Gastrocnemius medialis (tissue), 4 donors: ENCODE measurements at regions of chr16 and their contacts with region 1.

Region 1: GRCh38 chr16:75198135-75198600 is 8.8 kb downstream of the CTRB2 start:
- DNase-seq: no peak
- ATAC-seq: no peak
- H3K4me3 ChIP-seq: no peak overlapping the region
- H3K27ac ChIP-seq: no peak overlapping the region
- H3K4me1 ChIP-seq: no peaks in the 10 kb centered on the region
- H3K27me3 ChIP-seq: peaks cover 0 to 10% (median 7%) of the 10 kb centered on the region in 3 donors
- CTCF ChIP-seq: no peak
- POLR2A ChIP-seq: no peak

Region 2: GRCh38 chr16:75379911-75380847 is 182.0 kb after region 1 on chr16:
- in situ Hi-C with region 1: loop called in 3 of 4 experiments (anchors 5 kb)
- intact Hi-C with region 1: loop called (anchors 1 kb)
- DNase-seq: no peak
- ATAC-seq: no peak
- H3K4me3 ChIP-seq: no peak overlapping the region
- H3K27ac ChIP-seq: no peak overlapping the region
- H3K4me1 ChIP-seq: peaks cover under 1 to 4% of the 10 kb centered on the region in 2 donors
- H3K27me3 ChIP-seq: no peaks in the 10 kb centered on the region
- CTCF ChIP-seq: no peak
- POLR2A ChIP-seq: no peak

Region 3: DNA sequence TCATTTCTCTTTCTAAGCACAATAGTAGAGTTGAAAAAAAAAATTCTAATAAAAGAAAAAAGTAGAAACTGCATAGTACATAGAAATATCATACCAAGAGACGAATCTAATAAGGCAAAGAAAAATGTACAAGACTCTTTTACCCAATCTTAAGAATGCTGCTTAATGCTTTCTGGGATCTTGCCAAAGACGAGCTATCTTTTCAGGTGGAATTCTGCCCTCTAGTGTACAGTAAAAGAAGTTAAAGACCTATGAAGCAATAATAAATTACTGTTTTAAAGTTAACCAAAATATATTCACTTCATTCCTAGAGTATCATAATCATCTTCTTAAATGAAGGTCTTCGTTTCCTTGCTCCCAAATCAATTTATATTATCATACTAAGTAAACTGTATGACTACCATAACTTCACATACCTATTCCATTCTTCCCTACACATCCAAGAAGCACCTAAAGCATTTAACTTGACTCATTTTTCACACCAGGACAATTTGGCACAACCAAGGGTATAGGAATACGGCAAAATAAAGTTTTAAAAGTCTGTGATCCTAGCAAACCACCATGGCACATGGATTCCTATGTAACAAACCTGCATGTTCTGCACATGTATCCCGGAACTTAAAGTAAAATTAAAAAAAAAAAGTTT is 187.5 kb after region 1 on chr16:
- in situ Hi-C with region 1: loop called in 3 of 4 experiments (anchors 5 kb)
- intact Hi-C with region 1: loop called (anchors 1 kb)
- DNase-seq: no peak
- ATAC-seq: peak; percentile 60 to 64
- H3K4me3 ChIP-seq: no peak overlapping the region
- H3K27ac ChIP-seq: peak overlapping the region in 1 of 4 donors; percentile 11
- H3K4me1 ChIP-seq: peaks cover 3 to 4% of the 10 kb centered on the region in 2 donors
- H3K27me3 ChIP-seq: no peaks in the 10 kb centered on the region
- CTCF ChIP-seq: peak; percentile 73 to 94 (median 77)
- POLR2A ChIP-seq: no peak

Region 4: DNA sequence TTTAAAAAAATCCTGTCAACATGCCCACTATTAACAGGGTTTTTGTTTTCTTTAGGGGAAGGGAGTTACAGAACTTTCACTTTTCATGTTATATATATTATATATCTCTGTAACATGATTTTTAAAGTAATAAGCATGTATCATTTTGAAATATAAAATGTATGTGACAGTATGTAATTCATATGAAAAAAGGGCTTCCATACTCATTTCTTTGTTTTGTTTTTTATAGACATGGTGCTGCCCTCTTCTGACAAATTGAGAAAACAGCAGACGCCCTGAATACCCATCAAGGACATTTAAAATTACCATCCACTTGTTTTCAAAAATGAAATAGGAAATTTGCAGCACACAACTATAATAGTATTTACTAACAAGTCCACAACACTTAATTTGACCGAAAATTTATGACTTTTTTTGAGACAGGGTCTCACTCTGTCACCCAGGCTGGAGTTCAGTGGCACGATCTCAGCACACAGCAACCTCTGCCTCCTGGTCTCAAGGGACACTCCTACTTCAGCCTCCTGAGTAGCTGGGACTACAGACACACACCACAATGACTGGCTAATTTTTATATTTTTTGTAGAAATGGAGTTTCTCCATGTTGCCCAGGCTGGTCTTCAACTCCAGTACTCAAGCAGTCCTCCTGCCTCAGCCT is 204.8 kb after region 1 on chr16:
- in situ Hi-C with region 1: loop called in 1 of 4 experiments (anchors 10 kb)
- intact Hi-C with region 1: loop called (anchors 1 kb)
- DNase-seq: no peak
- ATAC-seq: peak in 1 of 2 donors; percentile 45
- H3K4me3 ChIP-seq: no peak overlapping the region
- H3K27ac ChIP-seq: peak overlapping the region in 2 of 4 donors; percentile 52 to 58
- H3K4me1 ChIP-seq: peaks cover 14 to 16% of the 10 kb centered on the region in 2 donors
- H3K27me3 ChIP-seq: no peaks in the 10 kb centered on the region
- CTCF ChIP-seq: peak; percentile 39 to 70 (median 50)
- POLR2A ChIP-seq: no peak

Region 5: GRCh38 chr16:75764154-75764768 is 566.1 kb after region 1 on chr16:
- in situ Hi-C with region 1: loop called in 2 of 4 experiments (anchors 25 kb)
- intact Hi-C with region 1: no loop called
- DNase-seq: no peak
- ATAC-seq: peak; percentile 50 to 71
- H3K4me3 ChIP-seq: no peak overlapping the region
- H3K27ac ChIP-seq: no peak overlapping the region
- H3K4me1 ChIP-seq: no peaks in the 10 kb centered on the region
- H3K27me3 ChIP-seq: no peaks in the 10 kb centered on the region
- CTCF ChIP-seq: peak in 4 of 5 experiments; percentile 24 to 58 (median 48)
- POLR2A ChIP-seq: no peak